Calu3 (cell line): ENCODE measurements at regions of chr12 and their contacts with region 1.

Region 1: GRCh38 chr12:96070670-96071279 is 35.4 kb upstream of the LTA4H start:
- DNase-seq: no peak
- H3K4me3 Mint-ChIP-seq: no peak overlapping the region
- H3K27ac Mint-ChIP-seq: no peak overlapping the region
- H3K4me1 Mint-ChIP-seq: peaks cover 39% of the 10 kb centered on the region
- H3K27me3 Mint-ChIP-seq: no peaks in the 10 kb centered on the region
- CTCF ChIP-seq: no peak

Region 2: GRCh38 chr12:96194971-96195844 is 124.4 kb after region 1 on chr12:
- CTCF ChIA-PET with region 1: interaction called, 3 read pairs
- intact Hi-C with region 1: loop called (anchors 5 kb)
- DNase-seq: peak; percentile 46
- H3K4me3 Mint-ChIP-seq: peak overlapping the region; percentile 85
- H3K27ac Mint-ChIP-seq: peak overlapping the region; percentile 92
- H3K4me1 Mint-ChIP-seq: peaks cover 37% of the 10 kb centered on the region
- H3K27me3 Mint-ChIP-seq: no peaks in the 10 kb centered on the region
- CTCF ChIP-seq: no peak